Caco-2 (cell line): ENCODE measurements at regions of chr2 and their contacts with region 1.

Region 1: GRCh38 chr2:78465707-78466106 is 559.8 kb upstream of the REG3G start:
- DNase-seq: no peak
- H3K4me3 ChIP-seq: no peak overlapping the region
- H3K4me3 Mint-ChIP-seq: no peak overlapping the region
- H3K27ac Mint-ChIP-seq: no peak overlapping the region
- H3K4me1 ChIP-seq: no peaks in the 10 kb centered on the region
- H3K4me1 Mint-ChIP-seq: peaks cover 6% of the 10 kb centered on the region
- H3K27me3 ChIP-seq: no peaks in the 10 kb centered on the region
- H3K27me3 Mint-ChIP-seq: no peaks in the 10 kb centered on the region
- CTCF ChIP-seq: peak in 1 of 2 experiments; percentile 21

Region 2: GRCh38 chr2:78351208-78351607 is 114.5 kb before region 1 on chr2:
- CTCF ChIA-PET with region 1: interaction called, 3 read pairs
- POLR2A ChIA-PET with region 1: no interaction called
- intact Hi-C with region 1: loop called (anchors 1 kb)
- DNase-seq: no peak
- H3K4me3 ChIP-seq: no peak overlapping the region
- H3K4me3 Mint-ChIP-seq: no peak overlapping the region
- H3K27ac Mint-ChIP-seq: no peak overlapping the region
- H3K4me1 ChIP-seq: no peaks in the 10 kb centered on the region
- H3K4me1 Mint-ChIP-seq: no peaks in the 10 kb centered on the region
- H3K27me3 ChIP-seq: no peaks in the 10 kb centered on the region
- H3K27me3 Mint-ChIP-seq: no peaks in the 10 kb centered on the region
- CTCF ChIP-seq: peak; percentile 8 to 43